Activated CD4-positive, alpha-beta T cell treated with anti-CD3 and anti-CD28 coated beads for 36 hours (primary cell): ENCODE measurements at regions of chr1 and their contacts with region 1.

Region 1: GRCh38 chr1:24688621-24689195 is 45.6 kb downstream of the SRRM1 start:
- DNase-seq: peak; percentile 78
- ATAC-seq: peak; percentile 92
- H3K4me3 Mint-ChIP-seq: no peak overlapping the region
- H3K27ac Mint-ChIP-seq: no peak overlapping the region
- H3K4me1 Mint-ChIP-seq: no peaks in the 10 kb centered on the region
- H3K27me3 Mint-ChIP-seq: no peaks in the 10 kb centered on the region

Region 2: GRCh38 chr1:24699628-24700027 is 10.9 kb after region 1 on chr1:
- CTCF ChIA-PET with region 1: interaction called, 17 read pairs
- POLR2A ChIA-PET with region 1: interaction called, 6 read pairs
- intact Hi-C with region 1: no loop called
- DNase-seq: no peak
- ATAC-seq: no peak
- H3K4me3 Mint-ChIP-seq: no peak overlapping the region
- H3K27ac Mint-ChIP-seq: no peak overlapping the region
- H3K4me1 Mint-ChIP-seq: no peaks in the 10 kb centered on the region
- H3K27me3 Mint-ChIP-seq: peaks cover 2% of the 10 kb centered on the region

Region 3: DNA sequence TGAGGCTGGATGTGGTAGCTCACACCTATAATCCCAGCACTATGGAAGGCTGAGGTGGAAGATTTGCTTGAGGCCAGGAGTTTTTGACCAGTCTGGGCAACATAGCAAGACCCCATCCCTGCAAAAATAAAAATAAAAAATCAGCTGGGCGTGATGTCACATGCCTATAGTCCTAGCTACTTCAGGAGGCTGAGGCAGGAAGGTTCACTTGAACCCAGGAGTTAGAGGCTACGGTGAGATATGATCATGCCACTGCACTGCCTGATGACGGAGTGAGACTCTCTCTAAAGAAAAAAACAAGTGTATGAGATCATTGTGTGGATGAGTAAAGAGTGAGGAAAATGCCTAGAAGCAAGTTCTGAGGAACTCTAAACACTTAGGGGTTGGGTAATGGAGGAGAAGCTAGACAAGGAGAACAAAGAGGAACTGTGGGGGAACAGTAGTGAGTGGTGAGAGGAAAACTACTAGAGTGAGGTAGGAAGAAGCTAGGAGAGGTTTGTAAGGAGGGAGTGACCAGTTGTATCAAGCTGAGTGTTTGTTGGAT is 73.5 kb after region 1 on chr1:
- CTCF ChIA-PET with region 1: interaction called, 4 read pairs
- POLR2A ChIA-PET with region 1: interaction called, 12 read pairs
- intact Hi-C with region 1: no loop called
- DNase-seq: no peak
- ATAC-seq: no peak
- H3K4me3 Mint-ChIP-seq: no peak overlapping the region
- H3K27ac Mint-ChIP-seq: no peak overlapping the region
- H3K4me1 Mint-ChIP-seq: no peaks in the 10 kb centered on the region
- H3K27me3 Mint-ChIP-seq: no peaks in the 10 kb centered on the region

Region 4: GRCh38 chr1:24830680-24831272 is 142.1 kb after region 1 on chr1:
- CTCF ChIA-PET with region 1: interaction called, 180 read pairs
- POLR2A ChIA-PET with region 1: interaction called, 4 read pairs
- intact Hi-C with region 1: loop called (anchors 1 to 2 kb)
- DNase-seq: no peak
- ATAC-seq: peak; percentile 36
- H3K4me3 Mint-ChIP-seq: no peak overlapping the region
- H3K27ac Mint-ChIP-seq: no peak overlapping the region
- H3K4me1 Mint-ChIP-seq: no peaks in the 10 kb centered on the region
- H3K27me3 Mint-ChIP-seq: no peaks in the 10 kb centered on the region

Region 5: GRCh38 chr1:25204797-25205480 is 516.2 kb after region 1 on chr1:
- CTCF ChIA-PET with region 1: interaction called, 3 read pairs
- POLR2A ChIA-PET with region 1: no interaction called
- intact Hi-C with region 1: loop called in 1 of 2 experiments (anchors 2 kb)
- DNase-seq: peak; percentile 20
- ATAC-seq: peak; percentile 58
- H3K4me3 Mint-ChIP-seq: no peak overlapping the region
- H3K27ac Mint-ChIP-seq: no peak overlapping the region
- H3K4me1 Mint-ChIP-seq: no peaks in the 10 kb centered on the region
- H3K27me3 Mint-ChIP-seq: no peaks in the 10 kb centered on the region